Left ventricle myocardium superior (tissue), 1 donor: ENCODE measurements at regions of chr9 and their contacts with region 1.

Region 1: DNA sequence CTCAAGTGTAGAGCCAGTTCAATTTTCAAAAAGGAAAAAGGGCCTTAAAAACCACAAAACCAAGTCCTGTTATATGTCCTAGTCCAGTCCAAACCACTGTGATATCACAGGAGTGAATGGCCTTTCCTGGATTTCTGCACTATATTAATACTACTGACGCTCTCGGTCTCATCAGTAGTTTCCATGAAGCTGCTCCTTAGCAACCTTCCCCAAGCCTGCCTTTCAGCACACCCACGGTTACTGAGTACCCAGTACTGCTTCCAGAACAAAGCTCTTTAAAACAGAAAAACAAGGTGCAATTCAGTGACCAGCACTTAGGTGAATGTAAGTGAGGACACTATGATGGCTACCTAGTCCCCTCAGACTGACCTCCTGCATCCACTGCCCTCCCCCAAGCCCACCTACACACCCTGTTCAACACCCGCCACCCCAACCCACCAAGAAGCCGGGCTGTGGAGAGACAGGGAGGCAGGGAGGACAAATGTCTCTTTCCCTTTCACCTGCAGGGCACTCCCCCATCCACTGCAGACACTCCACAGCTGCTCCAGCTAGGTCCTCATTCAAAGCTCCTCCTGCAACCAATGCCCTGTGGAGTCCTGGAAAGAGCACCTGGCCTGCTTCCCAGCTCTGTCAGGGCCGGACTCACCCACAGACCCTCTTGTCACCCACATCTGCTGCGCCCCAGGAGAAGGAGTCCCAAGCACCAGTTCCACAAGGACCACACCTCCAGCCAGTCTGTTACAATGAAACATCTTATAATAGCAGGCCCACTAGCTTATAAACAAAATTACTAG is 25.9 kb downstream of the PSMB7 start:
- DNase-seq: no peak
- ATAC-seq: peak; percentile 9

Region 2: GRCh38 chr9:124126571-124127289 is 262.6 kb before region 1 on chr9:
- intact Hi-C with region 1: loop called (anchors 5 kb)
- DNase-seq: peak; percentile 82
- ATAC-seq: peak; percentile 71

Region 3: GRCh38 chr9:124202447-124202971 is 186.8 kb before region 1 on chr9:
- intact Hi-C with region 1: no loop called
- DNase-seq: peak; percentile 52
- ATAC-seq: peak; percentile 81

Region 4: GRCh38 chr9:124332361-124333202 is 56.8 kb before region 1 on chr9:
- intact Hi-C with region 1: no loop called
- DNase-seq: no peak
- ATAC-seq: no peak

Region 5: DNA sequence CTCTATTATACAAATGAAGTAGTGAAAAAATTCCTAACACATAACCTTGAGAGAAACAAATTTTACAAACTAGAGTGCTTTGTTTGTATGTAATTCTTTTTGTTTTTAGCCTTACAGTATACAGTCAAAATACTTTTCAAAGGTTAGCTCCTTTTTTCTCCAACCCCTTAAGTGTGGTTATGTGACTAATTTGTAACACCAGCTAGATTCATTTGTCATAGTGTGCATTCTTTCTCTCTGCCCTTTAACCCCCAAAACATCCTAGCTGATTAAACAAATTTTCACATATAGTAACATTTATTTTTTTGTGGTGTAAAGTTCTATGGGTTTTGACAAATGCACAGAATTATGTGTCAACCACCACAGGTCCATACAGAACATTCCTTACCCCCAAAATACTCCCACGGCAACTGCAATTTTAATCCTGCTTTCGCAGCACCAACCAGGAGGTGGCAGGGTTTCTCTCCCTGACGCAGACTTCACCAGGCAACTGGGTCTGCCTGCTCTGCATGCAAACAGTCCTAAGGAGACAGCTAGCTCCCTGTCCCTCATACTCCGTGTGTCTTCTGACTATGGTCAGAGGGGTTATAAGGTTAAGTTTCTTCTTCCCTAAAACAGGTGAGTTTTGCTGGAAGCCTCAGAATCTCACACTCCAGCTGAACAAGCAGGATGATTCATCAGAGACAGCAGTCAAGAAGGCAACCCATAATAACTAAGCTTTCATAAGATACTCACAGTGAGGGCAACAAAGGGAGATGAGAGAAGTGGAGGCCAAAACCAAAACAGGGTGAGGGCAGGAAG is 162.3 kb after region 1 on chr9:
- intact Hi-C with region 1: no loop called
- DNase-seq: peak; percentile 34
- ATAC-seq: peak; percentile 77